Activated CD4-positive, alpha-beta T cell treated with anti-CD3 and anti-CD28 coated beads for 36 hours (primary cell): ENCODE measurements at regions of chr9 and their contacts with region 1.

Region 1: GRCh38 chr9:100222674-100223073 is 123.6 kb downstream of the INVS start:
- DNase-seq: no peak
- ATAC-seq: no peak
- H3K4me3 Mint-ChIP-seq: no peak overlapping the region
- H3K27ac Mint-ChIP-seq: no peak overlapping the region
- H3K4me1 Mint-ChIP-seq: peaks cover 3% of the 10 kb centered on the region
- H3K27me3 Mint-ChIP-seq: no peaks in the 10 kb centered on the region

Region 2: GRCh38 chr9:100028201-100028784 is 194.4 kb before region 1 on chr9:
- CTCF ChIA-PET with region 1: interaction called, 4 read pairs
- POLR2A ChIA-PET with region 1: no interaction called
- intact Hi-C with region 1: loop called in 1 of 2 experiments (anchors 2 kb)
- DNase-seq: peak; percentile 82
- ATAC-seq: peak; percentile 93
- H3K4me3 Mint-ChIP-seq: no peak overlapping the region
- H3K27ac Mint-ChIP-seq: no peak overlapping the region
- H3K4me1 Mint-ChIP-seq: peaks cover 3% of the 10 kb centered on the region
- H3K27me3 Mint-ChIP-seq: no peaks in the 10 kb centered on the region